HEK293T (cell line): ENCODE measurements at regions of chr15 and their contacts with region 1.

Region 1: DNA sequence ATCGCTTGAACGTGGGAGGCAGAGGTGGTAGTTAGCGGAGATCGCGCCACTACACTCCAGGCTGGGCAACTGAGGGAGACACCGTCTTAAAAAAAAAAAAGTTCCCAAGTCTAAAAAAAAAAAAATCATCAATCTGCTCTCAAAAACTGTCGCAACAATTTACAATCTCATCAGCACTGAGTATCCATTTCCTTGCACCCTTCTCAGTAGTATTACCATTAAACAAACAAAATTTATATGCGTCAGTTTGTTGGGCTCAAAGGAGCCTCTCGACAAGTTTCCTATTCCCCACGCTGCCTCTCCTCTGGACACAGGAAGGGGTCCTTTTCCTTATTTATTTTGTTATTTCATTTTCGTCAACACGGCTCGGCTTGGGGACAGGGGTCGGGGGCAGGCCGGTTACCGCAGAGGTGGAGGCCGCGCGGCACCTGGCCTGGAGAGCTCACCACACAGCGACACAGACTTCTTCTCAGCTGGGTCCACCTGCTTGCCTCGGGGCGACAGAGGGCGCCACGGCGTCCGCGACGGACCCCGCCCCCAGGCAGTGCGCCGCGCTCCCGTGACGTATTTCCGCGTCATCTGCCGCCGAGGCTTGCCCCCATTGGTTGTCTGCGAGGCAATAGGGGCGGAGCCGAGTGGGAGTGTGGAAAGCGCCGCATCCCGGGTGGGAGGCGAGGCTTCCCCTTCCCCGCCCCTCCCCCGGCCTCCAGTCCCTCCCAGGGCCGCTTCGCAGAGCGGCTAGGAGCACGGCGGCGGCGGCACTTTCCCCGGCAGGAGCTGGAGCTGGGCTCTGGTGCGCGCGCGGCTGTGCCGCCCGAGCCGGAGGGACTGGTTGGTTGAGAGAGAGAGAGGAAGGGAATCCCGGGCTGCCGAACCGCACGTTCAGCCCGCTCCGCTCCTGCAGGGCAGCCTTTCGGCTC is at the start of gene MAP2K1:
- DNase-seq: peak; percentile 96

Region 2: DNA sequence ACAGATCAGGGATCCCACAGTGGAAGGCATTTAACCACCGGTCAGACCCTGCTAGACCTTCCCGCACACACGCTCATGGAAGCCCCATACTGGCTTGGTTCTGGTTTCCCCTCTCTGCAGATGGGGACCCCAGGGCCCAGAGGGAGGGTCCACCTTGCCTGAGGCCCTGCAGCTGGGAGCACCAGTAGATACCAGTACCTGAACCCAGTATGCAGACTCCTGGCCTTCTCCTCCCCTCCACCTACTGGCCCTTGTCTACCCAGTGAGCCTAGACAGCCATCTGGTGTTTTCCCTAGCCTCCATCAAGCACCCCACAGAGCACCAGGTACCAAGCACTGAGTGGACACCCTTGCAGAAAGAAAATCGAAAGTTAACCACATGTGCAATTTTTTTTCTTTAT is 198.0 kb before region 1 on chr15:
- CTCF ChIA-PET with region 1: no interaction called
- POLR2A ChIA-PET with region 1: no interaction called
- DNase-seq: no peak

Region 3: GRCh38 chr15:66356345-66357236 is 29.9 kb before region 1 on chr15 and contains the start of gene TIPIN:
- CTCF ChIA-PET with region 1: no interaction called
- POLR2A ChIA-PET with region 1: interaction called, 35 read pairs
- DNase-seq: peak; percentile 95

Region 4: DNA sequence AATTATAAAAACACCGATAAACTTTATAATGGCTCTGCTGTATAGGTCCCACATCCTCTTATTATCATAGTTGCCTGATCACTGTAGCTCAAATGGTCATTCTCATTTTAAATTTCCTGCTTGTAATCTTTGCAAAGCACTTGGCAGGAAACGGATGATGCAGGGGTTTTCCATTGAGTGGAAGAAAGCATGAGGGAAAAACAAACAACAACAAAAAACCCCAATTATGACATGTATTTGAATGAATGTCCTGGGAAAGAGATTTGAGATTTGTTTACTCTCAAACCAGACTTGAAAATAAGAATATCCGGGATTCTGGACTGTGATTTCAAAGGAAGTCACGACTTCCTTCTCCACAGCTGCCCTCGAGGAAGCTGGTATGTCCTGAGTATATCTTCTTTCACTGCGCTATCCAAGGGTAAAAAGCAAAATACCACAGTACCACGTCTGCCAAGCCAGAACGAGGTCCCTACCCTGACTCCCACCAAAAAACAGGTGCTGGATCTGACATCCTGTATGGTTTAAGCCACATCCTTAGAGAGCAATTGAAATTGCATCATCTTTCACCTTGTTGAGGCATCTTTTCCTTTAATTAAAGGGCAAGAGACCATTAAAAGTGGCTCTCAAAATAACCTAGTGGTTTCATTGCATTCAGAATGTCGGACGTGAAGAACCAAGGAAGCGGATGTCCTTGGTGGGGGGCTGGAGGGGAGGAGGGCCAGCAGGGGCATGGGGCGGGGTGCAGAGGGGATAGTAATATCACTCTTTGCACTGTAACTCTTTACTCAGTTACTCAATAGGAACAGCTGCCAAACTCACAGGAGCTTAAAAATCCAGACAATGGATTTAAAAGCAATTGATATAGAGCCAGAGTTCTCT is 16.5 kb before region 1 on chr15:
- CTCF ChIA-PET with region 1: no interaction called
- POLR2A ChIA-PET with region 1: interaction called, 15 read pairs
- DNase-seq: no peak

Region 5: DNA sequence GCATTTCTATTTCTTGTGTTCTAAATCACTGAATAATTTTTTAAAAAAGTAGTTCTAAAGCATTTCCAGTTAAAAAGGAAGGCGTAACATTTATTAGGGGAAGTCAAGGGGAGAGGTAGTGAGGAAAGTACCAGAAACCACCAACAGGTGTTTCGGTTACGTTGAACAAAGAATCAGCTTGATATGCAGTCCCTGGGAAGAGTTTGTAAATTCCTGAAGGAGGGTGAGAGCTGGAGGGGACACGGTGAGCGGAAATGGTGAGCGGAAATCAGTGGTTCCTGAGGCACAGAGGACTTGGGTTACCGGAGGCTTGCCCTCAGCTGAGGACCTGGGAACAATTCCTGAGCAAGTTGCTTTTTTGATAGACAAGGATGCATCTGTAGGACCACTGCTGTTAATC is 18.1 kb after region 1 on chr15:
- CTCF ChIA-PET with region 1: interaction called, 8 read pairs
- POLR2A ChIA-PET with region 1: interaction called, 15 read pairs
- DNase-seq: no peak

Region 6: DNA sequence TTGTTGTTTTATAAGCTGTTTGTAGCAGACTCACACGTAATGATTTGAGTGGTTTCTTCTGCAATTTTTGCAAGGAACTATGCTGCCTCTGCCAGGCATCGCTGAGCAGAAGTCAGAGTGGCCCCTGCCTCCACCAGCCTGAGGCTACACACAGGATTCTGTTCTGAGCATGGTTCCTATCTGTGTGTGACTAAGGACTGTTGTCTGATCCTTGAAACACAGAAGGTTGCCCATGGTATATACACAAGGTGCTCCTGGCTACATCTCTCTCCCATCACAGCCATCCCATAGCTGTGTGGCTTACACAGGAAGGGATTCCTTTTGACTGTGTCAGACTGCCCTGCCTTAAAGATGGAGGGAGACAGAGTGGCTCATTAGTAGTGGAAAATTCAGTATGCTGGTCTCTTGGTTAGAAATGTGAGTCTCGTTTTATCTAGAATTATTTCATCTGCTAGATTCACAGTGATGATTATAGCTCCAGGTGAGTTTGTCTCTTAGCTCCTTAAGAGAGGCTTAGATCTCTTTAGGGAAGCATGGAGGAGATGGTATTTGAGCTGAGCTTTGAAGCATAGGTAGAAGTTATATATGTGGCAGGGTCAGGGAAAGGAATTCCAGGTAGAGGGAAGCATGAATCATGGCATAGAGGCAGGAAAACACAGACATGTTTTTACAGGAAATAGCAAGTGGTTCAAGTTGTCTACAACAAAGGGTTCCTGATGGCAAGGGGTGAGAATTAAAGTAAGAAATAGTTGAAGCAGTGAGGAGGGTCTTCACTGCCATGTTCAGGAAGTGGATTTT is 73.6 kb after region 1 on chr15:
- CTCF ChIA-PET with region 1: no interaction called
- POLR2A ChIA-PET with region 1: no interaction called
- DNase-seq: no peak

Region 7: DNA sequence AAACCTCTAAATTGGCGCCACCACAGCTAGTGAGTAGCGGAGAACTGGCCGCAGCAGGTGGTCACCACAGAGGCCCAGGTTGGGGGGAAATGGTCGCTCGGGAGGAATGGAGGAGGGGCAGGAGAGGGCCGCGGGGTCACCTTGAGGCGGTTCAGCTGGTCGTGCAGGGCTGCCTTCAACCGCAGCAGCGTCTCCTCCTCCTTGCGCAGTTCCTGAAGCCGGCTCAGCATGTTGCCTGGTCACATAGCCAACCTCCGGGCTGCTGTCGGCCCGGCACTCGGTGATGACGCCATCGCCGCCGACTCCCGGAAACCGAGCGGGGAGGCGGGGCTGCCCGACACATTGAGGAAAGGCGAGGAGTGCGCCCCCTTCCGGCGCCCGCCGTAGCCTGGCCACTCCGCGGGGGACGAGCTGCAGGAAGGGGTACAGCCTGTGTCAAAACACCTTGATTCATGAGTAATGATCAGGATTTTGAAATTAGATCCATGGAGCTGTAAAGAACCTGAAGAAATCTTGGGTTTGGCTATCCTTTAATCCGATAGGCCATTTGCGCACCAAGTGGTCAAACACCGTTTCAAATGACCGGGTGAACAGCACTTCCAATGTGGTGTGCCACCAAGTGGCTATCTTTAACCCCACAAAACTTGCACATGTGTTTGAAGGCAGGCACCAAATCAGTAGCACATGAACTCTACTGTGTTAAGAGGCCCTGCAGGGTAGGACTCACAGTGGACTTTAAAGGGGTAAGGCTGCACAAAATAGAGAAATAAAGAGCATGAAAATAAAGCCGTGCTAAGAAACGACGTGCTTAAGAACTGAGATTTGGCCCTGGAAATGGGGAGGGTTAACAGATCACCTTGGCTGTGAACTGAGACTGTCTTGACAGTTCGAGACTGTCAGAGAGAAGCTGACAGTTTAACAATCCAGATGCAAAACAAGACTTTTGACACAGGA is 111.3 kb after region 1 on chr15 and contains the start of gene SNAPC5:
- CTCF ChIA-PET with region 1: interaction called, 11 read pairs
- POLR2A ChIA-PET with region 1: interaction called, 35 read pairs
- DNase-seq: peak; percentile 93